K562 (cell line): ENCODE measurements at regions of chrX and their contacts with region 1.

Region 1: DNA sequence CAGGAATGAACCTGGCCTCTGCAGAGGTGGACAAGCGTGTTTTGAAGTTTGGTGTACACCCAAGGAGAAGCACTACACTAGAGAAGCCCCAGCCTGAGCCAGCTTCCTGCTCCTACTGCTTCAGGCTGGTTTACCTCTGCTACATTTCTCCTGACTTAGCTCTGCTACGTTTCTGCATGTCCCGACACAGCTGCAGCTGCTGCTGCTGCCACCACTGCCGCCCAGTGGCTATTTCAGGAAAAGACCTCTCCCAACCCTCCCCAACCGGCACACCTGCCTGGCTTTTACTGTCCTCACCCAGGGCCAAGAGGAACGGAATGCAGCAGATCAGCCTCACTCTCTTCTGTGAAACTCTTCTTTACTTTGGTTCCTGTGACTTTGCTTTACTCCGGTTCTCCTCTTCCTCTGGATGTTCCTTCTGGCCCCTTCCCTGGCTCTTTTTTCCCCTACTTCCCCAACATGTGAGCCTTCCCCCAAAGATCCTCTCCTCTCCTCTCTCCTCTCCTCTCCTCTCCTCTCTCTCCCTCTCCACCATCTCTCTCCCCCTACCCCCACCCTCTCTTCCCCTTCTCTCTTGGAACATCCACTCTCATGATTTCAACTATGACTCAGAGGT is 3.1 kb upstream of the P2RY4 start:
- DNase-seq: peak; percentile 45 to 60 (median 50)
- ATAC-seq: peak; percentile 99
- H3K4me3 ChIP-seq: no peak overlapping the region
- H3K27ac ChIP-seq: no peak overlapping the region
- H3K4me1 ChIP-seq: no peaks in the 10 kb centered on the region; a peak in 1 of 5 replicates
- H3K27me3 ChIP-seq: peaks cover 4 to 25% of the 10 kb centered on the region in 2 experiments; a peak in 4 of 5 replicates
- CTCF ChIP-seq: peak; percentile 73 to 79 (median 79)
- EP300 ChIP-seq: no peak
- POLR2A ChIP-seq: no peak
- RAD21 ChIP-seq: peak; percentile 58 to 72

Region 2: GRCh38 chrX:68784816-68785215 is 1478.2 kb before region 1 on chrX:
- CTCF ChIA-PET with region 1: no interaction called
- POLR2A ChIA-PET with region 1: no interaction called
- in situ Hi-C with region 1: no loop called
- intact Hi-C with region 1: no loop called
- DNase-seq: no peak
- ATAC-seq: no peak
- H3K4me3 ChIP-seq: no peak overlapping the region
- H3K27ac ChIP-seq: no peak overlapping the region
- H3K4me1 ChIP-seq: peaks cover 0 to 4% of the 10 kb centered on the region in 2 experiments; a peak in 2 of 5 replicates
- H3K27me3 ChIP-seq: no peaks in the 10 kb centered on the region; a peak in 1 of 5 replicates
- CTCF ChIP-seq: no peak
- EP300 ChIP-seq: no peak
- POLR2A ChIP-seq: no peak
- RAD21 ChIP-seq: no peak

Region 3: GRCh38 chrX:70133303-70134115 is 129.6 kb before region 1 on chrX and contains the start of gene IGBP1:
- CTCF ChIA-PET with region 1: no interaction called
- POLR2A ChIA-PET with region 1: no interaction called
- in situ Hi-C with region 1: no loop called
- intact Hi-C with region 1: loop called (anchors 2 kb)
- DNase-seq: peak; percentile 85 to 91 (median 86)
- ATAC-seq: peak; percentile 96
- H3K4me3 ChIP-seq: peak within 1 kb of the TSS; percentile 84
- H3K27ac ChIP-seq: peak within 1 kb of the TSS; percentile 97
- H3K4me1 ChIP-seq: peaks cover 5 to 8% of the 10 kb centered on the region in 2 experiments; a peak in 3 of 5 replicates
- H3K27me3 ChIP-seq: no peaks in the 10 kb centered on the region
- CTCF ChIP-seq: peak; percentile 80 to 92 (median 84)
- EP300 ChIP-seq: peak; percentile 10; the same call in 1 of the 2 replicates
- POLR2A ChIP-seq: peak; percentile 84
- RAD21 ChIP-seq: peak; percentile 24 to 42
- polyA plus RNA-seq, gene IGBP1: 79.3 to 91.5 TPM

Region 4: DNA sequence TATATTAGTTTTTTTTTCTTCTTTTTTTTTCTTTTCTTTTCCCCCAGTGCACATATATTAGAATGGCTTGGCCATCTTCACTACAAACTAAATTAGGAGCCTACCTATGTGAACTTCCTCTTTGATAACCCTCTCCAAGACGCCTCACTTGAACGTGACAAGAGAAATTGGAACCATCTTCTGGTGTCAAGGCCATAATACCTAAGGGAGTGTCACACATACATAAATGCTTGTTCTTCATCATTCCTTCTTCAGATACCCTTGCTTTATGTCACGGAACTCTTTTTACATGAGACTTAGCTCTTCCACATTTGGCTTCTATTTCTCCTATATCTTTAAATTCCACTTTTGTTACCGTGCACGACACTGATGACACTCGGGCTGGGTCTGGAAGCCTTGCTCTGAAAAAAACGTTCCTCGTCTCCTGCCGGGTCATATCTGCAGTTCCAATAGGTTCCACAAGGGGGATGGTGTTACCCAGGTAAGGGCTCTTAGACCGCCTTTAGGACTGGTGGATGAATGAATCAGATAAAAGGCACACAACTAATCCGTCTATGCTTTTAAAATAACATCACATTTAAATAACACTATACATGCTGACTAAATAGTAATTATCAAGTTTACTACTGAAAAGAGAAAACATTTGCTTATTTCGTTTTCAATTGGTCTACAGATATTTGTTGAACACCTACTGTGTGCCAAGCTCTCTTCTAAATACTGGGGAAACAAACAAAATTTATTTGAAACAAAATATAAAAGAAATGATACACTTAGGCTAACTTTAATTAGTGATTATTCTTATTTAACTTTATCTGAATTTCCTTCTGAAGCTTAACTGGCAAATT is 65.9 kb before region 1 on chrX:
- CTCF ChIA-PET with region 1: no interaction called
- POLR2A ChIA-PET with region 1: no interaction called
- in situ Hi-C with region 1: no loop called
- intact Hi-C with region 1: loop called (anchors 1 kb)
- DNase-seq: peak; percentile 60 to 74 (median 71)
- ATAC-seq: peak; percentile 96
- H3K4me3 ChIP-seq: no peak overlapping the region
- H3K27ac ChIP-seq: no peak overlapping the region
- H3K4me1 ChIP-seq: no peaks in the 10 kb centered on the region
- H3K27me3 ChIP-seq: peaks cover 0 to 19% of the 10 kb centered on the region in 2 experiments; a peak in 2 of 5 replicates
- CTCF ChIP-seq: peak; percentile 72 to 76 (median 74)
- EP300 ChIP-seq: no peak
- POLR2A ChIP-seq: no peak
- RAD21 ChIP-seq: peak; percentile 64 to 75

Region 5: DNA sequence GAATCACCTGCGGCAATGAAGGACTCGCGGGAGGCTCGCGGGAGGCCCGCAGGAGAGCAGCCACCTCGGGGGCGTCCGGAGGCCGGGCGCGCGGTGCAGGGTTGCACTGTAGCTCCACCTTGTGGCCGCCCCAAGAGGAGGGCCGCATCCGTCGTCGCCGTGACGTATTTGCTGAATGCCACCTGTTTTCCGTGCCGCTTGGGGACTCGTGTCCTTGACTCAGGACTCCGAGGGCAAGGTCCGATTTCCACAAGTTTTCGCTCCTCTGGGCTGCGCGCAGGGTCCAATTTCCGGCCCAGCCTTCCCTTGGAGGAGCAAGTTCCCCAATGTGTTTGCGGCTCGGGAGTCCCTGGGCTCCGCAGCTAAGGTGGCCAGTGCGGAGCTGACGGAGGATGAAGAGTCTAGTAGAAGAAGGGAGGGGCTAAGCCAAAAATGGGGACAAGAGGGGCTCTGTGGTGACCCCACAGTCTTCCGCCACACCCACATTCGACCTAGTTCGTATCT is 170.8 kb after region 1 on chrX:
- CTCF ChIA-PET with region 1: no interaction called
- POLR2A ChIA-PET with region 1: no interaction called
- in situ Hi-C with region 1: no loop called
- intact Hi-C with region 1: loop called (anchors 10 kb)
- DNase-seq: peak; percentile 79 to 84 (median 80)
- ATAC-seq: peak; percentile 89
- H3K4me3 ChIP-seq: peak overlapping the region; percentile 75
- H3K27ac ChIP-seq: peak overlapping the region; percentile 79
- H3K4me1 ChIP-seq: peaks cover 12 to 16% of the 10 kb centered on the region in 2 experiments; a peak in 4 of 5 replicates
- H3K27me3 ChIP-seq: peaks cover 2 to 11% of the 10 kb centered on the region in 2 experiments; a peak in 2 of 5 replicates
- CTCF ChIP-seq: peak; percentile 77 to 81 (median 81)
- EP300 ChIP-seq: no peak
- POLR2A ChIP-seq: peak; percentile 55
- RAD21 ChIP-seq: peak; percentile 43 to 64